ENCODE measurements at regions of chr17 and their contacts with region 1.

Region 1: DNA sequence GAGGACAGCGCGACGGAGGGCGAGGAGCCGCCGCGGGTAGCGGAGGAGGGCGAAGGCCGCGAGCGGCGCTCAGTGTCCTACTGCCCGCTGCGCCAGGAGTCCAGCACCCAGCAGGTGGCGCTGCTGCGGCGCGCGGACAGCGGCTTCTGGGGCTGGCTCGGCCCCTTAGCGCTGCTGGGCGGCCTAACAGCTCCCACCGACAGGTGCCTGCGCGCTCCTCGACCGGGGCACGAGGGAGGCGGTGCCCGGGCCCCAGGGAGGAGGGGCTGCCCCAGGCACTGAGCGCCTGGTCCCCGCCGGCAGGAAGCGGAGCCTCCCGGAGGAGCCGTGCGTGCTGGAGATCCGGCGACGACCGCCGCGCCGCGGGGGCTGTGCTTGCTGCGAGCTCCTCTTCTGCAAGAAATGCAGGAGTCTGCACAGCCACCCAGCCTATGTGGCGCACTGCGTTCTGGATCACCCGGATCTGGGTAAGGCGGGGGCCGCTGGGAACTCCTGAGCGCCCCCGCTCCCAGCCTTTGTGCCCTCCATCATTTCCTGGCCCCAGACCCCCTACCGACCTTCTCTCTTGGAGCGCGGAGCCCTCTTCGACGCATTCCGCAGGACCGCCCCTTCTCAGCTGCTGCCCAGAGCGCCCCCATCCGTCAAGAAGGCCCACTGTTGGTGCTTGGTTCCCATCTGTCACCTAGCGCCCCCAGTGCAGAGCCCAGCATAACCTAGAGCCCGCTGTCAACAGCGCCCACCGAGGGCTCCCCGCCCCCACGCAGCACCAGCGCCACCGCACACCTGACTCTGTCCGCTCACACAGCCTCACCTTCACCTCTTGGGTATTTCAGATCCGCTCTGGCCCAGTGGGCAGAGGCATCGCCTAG is 3.7 kb downstream of the C17orf50 start:
- DNase-seq: peak; percentile 90
- ATAC-seq: peak; percentile 98
- H3K4me3 ChIP-seq: peak overlapping the region; percentile 51; the same call in 1 of the 2 replicates
- H3K27ac ChIP-seq: no peak overlapping the region
- H3K4me1 ChIP-seq: 0 out of 2 replicates have a peak, but pooled peaks cover 3% of the 10 kb centered on the region
- H3K27me3 ChIP-seq: no peaks in the 10 kb centered on the region
- CTCF ChIP-seq: peak; percentile 58

Region 2: DNA sequence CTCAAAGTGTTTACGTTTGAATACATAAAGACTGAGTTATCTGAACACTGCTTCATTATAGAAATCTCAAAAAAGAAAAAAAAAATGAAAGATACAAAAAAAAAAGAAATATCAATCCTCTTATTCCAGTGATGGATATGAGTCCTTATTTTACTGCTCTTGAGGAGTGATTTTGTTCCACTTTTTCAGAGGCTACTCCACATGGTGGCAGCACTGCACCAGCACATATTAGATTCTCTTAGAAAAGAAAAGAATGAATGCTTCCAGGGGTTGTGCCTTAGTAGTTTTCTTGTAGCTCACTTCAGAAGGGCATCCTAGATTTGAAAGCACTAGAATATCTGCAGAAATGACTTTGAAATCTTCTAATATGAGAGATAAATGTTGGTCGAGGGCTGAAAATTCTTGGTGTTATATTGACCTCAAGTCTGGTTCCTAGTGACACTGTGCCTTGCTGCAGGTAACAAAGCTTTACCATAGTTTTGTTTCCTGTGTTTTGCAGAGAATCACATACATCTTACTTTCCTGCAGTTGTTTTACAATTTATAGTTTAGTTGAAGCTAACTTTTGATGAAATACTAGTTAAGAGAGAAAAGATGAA is 151.3 kb before region 1 on chr17:
- CTCF ChIA-PET with region 1: interaction called, 14 read pairs
- POLR2A ChIA-PET with region 1: no interaction called
- intact Hi-C with region 1: no loop called
- DNase-seq: peak; percentile 48
- ATAC-seq: peak; percentile 46; the same call in 1 of the 2 replicates
- H3K4me3 ChIP-seq: no peak overlapping the region
- H3K27ac ChIP-seq: no peak overlapping the region
- H3K4me1 ChIP-seq: no peaks in the 10 kb centered on the region
- H3K27me3 ChIP-seq: no peaks in the 10 kb centered on the region
- CTCF ChIP-seq: peak; percentile 70

Region 3: DNA sequence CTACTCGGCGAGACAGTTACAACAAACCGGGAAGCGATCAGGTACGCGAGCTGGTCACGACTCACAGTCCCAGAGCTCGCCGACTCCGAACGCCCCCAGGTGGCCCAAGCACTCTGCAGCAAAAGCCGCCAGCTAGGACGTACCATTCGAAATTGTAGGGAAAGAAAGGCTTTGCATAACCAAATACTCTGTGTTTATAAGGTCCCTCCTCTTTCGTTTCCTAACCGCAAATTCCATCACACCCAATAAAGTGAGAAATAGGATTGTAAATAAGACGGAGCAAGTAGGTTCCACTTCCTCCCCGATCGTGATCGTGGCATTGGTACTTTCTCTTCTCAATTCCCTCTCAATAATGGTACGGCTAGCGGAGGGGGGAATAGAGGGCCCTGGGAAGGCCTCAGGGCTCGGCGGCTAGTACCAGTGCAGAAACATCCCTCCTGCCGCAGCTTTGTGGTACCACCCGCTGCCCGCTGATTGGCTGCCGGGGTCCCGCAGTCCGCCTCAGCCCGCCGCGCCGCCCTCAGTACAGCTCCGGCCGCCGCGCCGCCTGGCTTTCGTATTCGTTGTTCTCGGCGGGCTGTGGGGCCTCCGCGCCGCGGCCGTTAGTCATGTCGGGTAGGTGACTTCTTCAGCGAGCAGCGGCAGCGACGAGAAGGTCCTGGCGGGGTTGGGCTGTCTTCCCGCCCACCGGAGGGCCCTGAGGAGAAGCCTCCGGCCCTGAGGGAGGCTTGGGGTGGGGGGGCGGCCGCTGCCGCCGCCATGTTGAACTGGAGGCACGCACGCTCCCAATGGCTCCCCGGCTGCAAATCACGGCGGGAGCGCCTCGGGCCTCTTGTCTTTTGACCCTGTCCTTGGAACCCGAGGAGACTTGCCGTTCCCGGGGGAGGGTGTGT is 44.9 kb after region 1 on chr17 and contains the start of gene TAF15:
- CTCF ChIA-PET with region 1: interaction called, 18 read pairs
- POLR2A ChIA-PET with region 1: interaction called, 6 read pairs
- intact Hi-C with region 1: loop called (anchors 1 kb)
- DNase-seq: peak; percentile 94
- ATAC-seq: peak; percentile 90
- H3K4me3 ChIP-seq: peak within 1 kb of the TSS; percentile 97
- H3K27ac ChIP-seq: peak within 1 kb of the TSS; percentile 88
- H3K4me1 ChIP-seq: peaks cover 31% of the 10 kb centered on the region
- H3K27me3 ChIP-seq: no peaks in the 10 kb centered on the region
- CTCF ChIP-seq: peak; percentile 78
- total RNA-seq, gene TAF15: 32.4 and 48.1 TPM in 2 replicates

Measured in PC-3 (cell line).